Dorsolateral prefrontal cortex (tissue), 120 donors: ENCODE measurements at regions of chr21 and their contacts with region 1.

Region 1: GRCh38 chr21:29024474-29025327 is at the start of gene USP16:
- DNase-seq: peak; percentile 87 to 97 (median 96)
- H3K4me3 ChIP-seq: peak within 1 kb of the TSS; percentile 69 to 100 (median 85)
- H3K27ac ChIP-seq: peak within 1 kb of the TSS; percentile 80 to 100 (median 99)
- H3K27me3 ChIP-seq: no peaks in the 10 kb centered on the region
- CTCF ChIP-seq: peak in 15 of 56 donors; percentile 5 to 41 (median 14)
- total RNA-seq, gene USP16: 25.4 to 46.5 (median 34.6) TPM

Region 2: GRCh38 chr21:28893687-28894086 is 131.0 kb before region 1 on chr21:
- intact Hi-C with region 1: no loop called
- DNase-seq: no peak
- H3K4me3 ChIP-seq: no peak overlapping the region
- H3K27ac ChIP-seq: no peak overlapping the region
- H3K27me3 ChIP-seq: peaks cover 0 to 6% (median 0%) of the 10 kb centered on the region in 45 donors
- CTCF ChIP-seq: no peak

Region 3: GRCh38 chr21:28992526-28993292 is 32.0 kb before region 1 on chr21 and contains the start of gene LTN1:
- intact Hi-C with region 1: loop called in 1 of 2 experiments (anchors 2 kb)
- DNase-seq: peak; percentile 97 to 99 (median 99)
- H3K4me3 ChIP-seq: peak within 1 kb of the TSS; percentile 61 to 100 (median 93)
- H3K27ac ChIP-seq: peak within 1 kb of the TSS in 58 of 59 donors; percentile 30 to 96 (median 87)
- H3K27me3 ChIP-seq: no peaks in the 10 kb centered on the region
- CTCF ChIP-seq: peak in 17 of 56 donors; percentile 5 to 44 (median 23)
- total RNA-seq, gene LTN1: 20.9 to 41.3 (median 32.8) TPM

Region 4: DNA sequence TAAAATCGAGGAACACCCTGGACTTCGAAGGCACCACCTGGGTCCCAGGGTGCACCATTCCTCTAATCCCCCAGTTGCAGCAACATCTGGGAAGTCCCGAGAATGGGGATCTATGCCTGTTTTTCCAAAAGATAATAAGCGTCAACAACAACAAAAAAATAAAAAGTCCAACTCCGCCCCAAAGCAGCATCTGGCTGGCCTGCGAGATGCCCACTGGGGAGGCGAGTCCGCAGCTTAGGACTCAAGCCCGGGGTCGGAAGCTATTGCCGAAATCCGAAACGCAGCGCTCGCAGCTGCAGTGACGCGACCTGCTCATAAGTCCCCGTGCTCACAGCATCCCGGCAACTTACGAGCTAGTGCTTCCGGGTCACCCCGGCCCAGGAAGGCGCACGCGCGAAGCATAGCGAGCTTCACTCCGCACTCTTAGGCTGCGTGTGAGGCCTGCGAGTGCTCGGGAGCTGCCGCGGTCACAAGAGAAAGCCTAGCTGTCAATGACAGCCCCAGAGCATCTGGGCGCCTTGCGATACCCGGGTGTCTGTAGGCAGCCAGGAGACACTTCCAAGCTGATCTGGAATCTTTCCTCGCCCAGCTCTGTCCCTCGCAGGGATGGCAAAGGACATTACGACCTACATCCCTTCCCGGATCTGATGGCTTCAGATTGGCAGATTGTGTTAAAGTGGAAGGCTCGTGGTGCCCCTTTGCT is 22.1 kb before region 1 on chr21:
- intact Hi-C with region 1: loop called (anchors 1 to 2 kb)
- DNase-seq: peak; percentile 95 to 98 (median 97)
- H3K4me3 ChIP-seq: peak overlapping the region; percentile 58 to 99 (median 80)
- H3K27ac ChIP-seq: peak overlapping the region; percentile 77 to 99 (median 95)
- H3K27me3 ChIP-seq: no peaks in the 10 kb centered on the region
- CTCF ChIP-seq: peak in 22 of 56 donors; percentile 4 to 48 (median 28)

Region 5: GRCh38 chr21:29073222-29074006 is 48.7 kb after region 1 on chr21 and contains the start of gene CCT8:
- intact Hi-C with region 1: loop called (anchors 1 to 5 kb)
- DNase-seq: peak; percentile 95 to 99 (median 98)
- H3K4me3 ChIP-seq: peak within 1 kb of the TSS; percentile 69 to 100 (median 91)
- H3K27ac ChIP-seq: peak within 1 kb of the TSS; percentile 54 to 99 (median 92)
- H3K27me3 ChIP-seq: no peaks in the 10 kb centered on the region
- CTCF ChIP-seq: peak in 35 of 56 donors; percentile 6 to 55 (median 29)
- total RNA-seq, gene CCT8: 53.0 to 139 (median 101) TPM